GM18951 (cell line): ENCODE measurements at regions of chr5 and their contacts with region 1.

Region 1: GRCh38 chr5:132490486-132491367 is at the start of gene IRF1:
- POLR2A ChIP-seq: peak; percentile 99

Region 2: GRCh38 chr5:132419502-132420468 is 70.9 kb before region 1 on chr5:
- in situ Hi-C with region 1: loop called (anchors 5 kb)
- POLR2A ChIP-seq: no peak

Region 3: GRCh38 chr5:133051580-133052332 is 561.0 kb after region 1 on chr5 and contains the start of gene HSPA4:
- in situ Hi-C with region 1: no loop called
- POLR2A ChIP-seq: peak; percentile 91

Region 4: DNA sequence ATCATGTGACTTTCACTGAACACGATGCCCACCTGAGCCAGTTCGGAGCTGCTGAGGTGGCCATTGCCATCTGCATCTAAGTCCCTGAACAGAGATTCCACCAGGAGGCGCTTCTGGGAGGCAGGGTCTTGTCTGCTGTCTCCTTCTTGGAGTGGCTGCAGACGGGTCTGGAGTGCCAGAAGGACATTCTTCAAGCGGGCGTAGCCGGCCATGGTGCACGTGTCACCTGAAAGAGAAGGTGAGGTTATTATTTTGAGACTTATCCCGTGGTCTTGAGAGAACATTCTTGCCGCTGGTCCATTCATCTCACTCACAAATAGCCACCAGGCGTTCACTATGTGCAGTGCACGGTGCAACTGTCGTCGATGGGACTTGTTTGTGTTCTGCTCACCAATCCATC is 825.7 kb after region 1 on chr5:
- in situ Hi-C with region 1: no loop called
- POLR2A ChIP-seq: no peak